ENCODE measurements at regions of chr20 and their contacts with region 1.

Region 1: DNA sequence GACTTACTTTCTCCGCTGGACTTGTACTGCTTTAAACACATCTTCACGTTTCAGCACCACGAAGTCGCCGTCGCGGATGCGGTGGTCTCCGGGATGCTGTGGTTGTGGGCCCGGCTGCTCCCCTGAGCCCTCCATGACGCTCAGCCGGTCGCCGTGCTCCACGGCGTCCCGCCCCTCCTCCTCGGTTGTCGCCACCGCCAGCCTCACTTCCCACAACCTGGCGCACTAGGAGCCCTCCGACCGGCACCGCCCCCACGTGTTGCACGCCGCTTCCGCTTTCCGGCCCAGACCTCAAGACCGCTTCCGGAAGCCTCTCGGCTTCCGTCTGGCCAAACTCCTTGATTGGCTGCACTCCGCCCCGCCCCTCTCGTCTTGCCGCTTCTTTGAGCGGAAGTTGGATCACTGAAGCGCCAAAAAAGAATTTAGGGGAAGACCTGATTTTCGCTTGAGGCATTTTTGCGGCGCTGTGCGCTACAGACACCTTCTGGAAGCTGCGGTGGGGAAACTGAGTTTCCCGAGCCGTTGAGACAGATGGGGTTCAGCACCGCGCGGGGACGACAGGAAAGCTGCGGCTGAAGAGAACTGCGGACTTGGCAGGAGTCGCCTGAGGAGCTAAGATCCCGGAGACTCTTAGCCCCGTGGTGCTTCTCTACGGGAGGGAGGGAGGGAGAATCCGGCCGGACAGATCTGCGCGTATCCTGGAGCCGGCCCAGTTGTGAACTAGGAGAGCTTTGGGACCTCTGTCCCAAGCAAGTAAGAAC is at the starts of genes MCM8 and TRMT6:
- DNase-seq: peak; percentile 95
- H3K4me3 Mint-ChIP-seq: peak within 1 kb of the TSS; percentile 95
- H3K27ac Mint-ChIP-seq: peak within 1 kb of the TSS; percentile 94
- H3K4me1 Mint-ChIP-seq: peaks cover 53% of the 10 kb centered on the region
- H3K27me3 Mint-ChIP-seq: no peaks in the 10 kb centered on the region
- total RNA-seq, gene MCM8: 33.5 and 35.2 TPM in 2 replicates
- total RNA-seq, gene TRMT6: 25.5 and 27.5 TPM in 2 replicates

Region 2: DNA sequence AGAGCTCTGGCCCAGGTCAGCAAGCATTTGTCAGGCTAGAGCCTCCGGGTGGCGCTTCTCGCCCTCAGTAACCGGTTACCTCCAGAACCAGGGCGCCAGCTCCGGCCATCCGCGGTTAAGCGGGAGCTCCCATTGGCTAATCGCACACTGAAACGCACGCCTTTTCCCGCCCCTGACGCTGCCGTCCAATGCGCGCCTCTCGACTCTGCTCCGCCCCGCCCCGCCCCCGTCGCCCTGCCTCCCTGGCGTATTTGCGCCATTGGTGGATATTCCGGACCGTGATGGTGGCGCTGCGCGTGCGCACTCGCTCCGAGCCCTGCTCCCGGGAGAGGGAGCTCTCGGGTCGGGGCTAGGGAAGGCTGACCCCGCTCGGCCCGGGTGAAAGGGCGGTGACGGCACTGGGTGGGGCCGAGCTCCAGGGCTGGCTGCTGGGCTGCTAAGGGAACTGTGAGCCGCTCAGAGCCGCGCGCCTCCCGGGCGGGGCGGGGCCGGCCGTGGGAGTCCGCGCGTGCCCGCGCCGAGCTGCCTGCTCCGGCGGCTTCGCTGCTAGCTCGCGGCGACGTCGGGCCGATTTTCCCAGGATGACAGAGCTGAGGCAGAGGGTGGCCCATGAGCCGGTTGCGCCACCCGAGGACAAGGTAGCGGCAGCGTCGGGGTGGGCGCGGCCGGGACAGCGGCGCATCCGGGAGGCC is 823.8 kb before region 1 on chr20 and contains the start of gene CDS2:
- intact Hi-C with region 1: loop called (anchors 10 kb)
- DNase-seq: peak; percentile 100
- H3K4me3 Mint-ChIP-seq: peak within 1 kb of the TSS; percentile 96
- H3K27ac Mint-ChIP-seq: peak within 1 kb of the TSS; percentile 96
- H3K4me1 Mint-ChIP-seq: peaks cover 39% of the 10 kb centered on the region
- H3K27me3 Mint-ChIP-seq: no peaks in the 10 kb centered on the region
- total RNA-seq, gene CDS2: 41.4 and 47.7 TPM in 2 replicates

Region 3: GRCh38 chr20:5844063-5844681 is 106.3 kb before region 1 on chr20:
- intact Hi-C with region 1: loop called (anchors 1 kb)
- DNase-seq: peak; percentile 64
- H3K4me3 Mint-ChIP-seq: peak overlapping the region; percentile 61
- H3K27ac Mint-ChIP-seq: peak overlapping the region; percentile 89
- H3K4me1 Mint-ChIP-seq: peaks cover 55% of the 10 kb centered on the region
- H3K27me3 Mint-ChIP-seq: peaks cover 2% of the 10 kb centered on the region

Region 4: GRCh38 chr20:5918856-5919625 is 31.4 kb before region 1 on chr20:
- intact Hi-C with region 1: loop called (anchors 1 kb)
- DNase-seq: no peak
- H3K4me3 Mint-ChIP-seq: no peak overlapping the region
- H3K27ac Mint-ChIP-seq: peak overlapping the region; percentile 68
- H3K4me1 Mint-ChIP-seq: peaks cover 20% of the 10 kb centered on the region
- H3K27me3 Mint-ChIP-seq: peaks cover 19% of the 10 kb centered on the region

Region 5: GRCh38 chr20:5996765-5997164 is 46.3 kb after region 1 on chr20:
- intact Hi-C with region 1: loop called (anchors 2 kb)
- DNase-seq: peak; percentile 62
- H3K4me3 Mint-ChIP-seq: no peak overlapping the region
- H3K27ac Mint-ChIP-seq: peak overlapping the region; percentile 60
- H3K4me1 Mint-ChIP-seq: peaks cover 21% of the 10 kb centered on the region
- H3K27me3 Mint-ChIP-seq: no peaks in the 10 kb centered on the region